Lower lobe of right lung (tissue), 2 donors: ENCODE measurements at regions of chr4 and their contacts with region 1.

Region 1: DNA sequence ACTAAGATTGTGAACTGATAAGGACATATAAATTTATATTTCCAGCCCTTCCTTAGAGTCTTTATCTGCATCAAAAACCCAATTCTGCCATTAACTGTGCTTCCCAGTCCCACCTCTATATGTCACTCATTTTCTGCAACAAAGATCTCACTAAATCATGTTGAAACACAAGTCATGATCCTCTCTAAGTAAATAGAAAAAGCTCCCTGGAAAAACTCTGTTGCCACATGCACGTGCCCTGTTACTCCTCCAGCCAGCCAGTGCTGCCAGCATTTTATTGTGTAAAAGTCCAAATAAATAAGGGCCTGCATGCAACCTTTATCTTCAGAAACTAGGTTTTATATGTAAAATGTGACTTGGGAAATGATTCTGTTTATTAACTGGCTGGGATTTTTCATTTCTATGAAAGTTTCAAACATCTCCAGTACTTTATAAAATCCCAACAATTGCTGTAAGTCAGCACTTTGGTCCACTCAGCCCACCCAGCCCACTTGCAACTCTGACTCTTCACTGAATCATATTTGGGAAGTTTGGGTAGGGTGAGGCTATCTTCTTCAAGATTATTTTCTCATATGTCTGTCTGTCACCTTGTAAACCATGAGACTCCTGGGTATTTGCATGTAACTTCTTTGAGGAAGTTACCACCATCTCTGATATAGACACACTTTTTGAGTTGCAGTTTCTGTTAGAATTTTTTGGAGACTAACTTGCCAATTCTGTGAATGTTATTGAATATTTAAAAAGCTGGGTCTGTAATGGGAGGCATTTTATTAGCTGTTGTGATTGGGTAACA is 40.0 kb upstream of the SMARCA5 start:
- DNase-seq: no peak
- ATAC-seq: no peak
- H3K4me3 ChIP-seq: no peak overlapping the region
- H3K27ac ChIP-seq: no peak overlapping the region
- H3K4me1 ChIP-seq: no peaks in the 10 kb centered on the region
- H3K27me3 ChIP-seq: no peaks in the 10 kb centered on the region
- CTCF ChIP-seq: no peak

Region 2: DNA sequence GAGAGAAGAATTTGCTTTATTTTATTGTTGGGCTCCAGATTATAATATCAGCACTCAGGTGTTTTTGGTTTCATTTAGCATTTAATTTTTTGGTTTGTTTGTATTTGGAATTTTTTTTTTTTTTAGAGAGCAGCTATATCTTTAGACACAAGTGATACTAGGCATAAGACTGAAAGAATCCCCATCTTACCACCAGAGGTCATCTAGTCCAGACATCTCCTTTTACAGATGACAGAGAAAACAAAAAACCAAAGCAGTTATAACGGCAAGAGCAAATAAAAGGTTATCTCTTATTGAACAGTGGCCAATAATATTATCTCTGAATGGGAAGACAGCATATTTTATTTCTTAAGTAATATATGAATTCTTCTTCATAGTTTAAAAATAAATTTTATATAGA is 266.0 kb before region 1 on chr4:
- intact Hi-C with region 1: loop called (anchors 10 kb)
- DNase-seq: no peak
- ATAC-seq: peak in 1 of 2 donors; percentile 35
- H3K4me3 ChIP-seq: no peak overlapping the region
- H3K27ac ChIP-seq: no peak overlapping the region
- H3K4me1 ChIP-seq: no peaks in the 10 kb centered on the region
- H3K27me3 ChIP-seq: no peaks in the 10 kb centered on the region
- CTCF ChIP-seq: peak; percentile 31

Region 3: GRCh38 chr4:143294310-143294709 is 179.2 kb before region 1 on chr4:
- intact Hi-C with region 1: no loop called
- DNase-seq: peak; percentile 58
- ATAC-seq: peak; percentile 67 to 79
- H3K4me3 ChIP-seq: no peak overlapping the region
- H3K27ac ChIP-seq: no peak overlapping the region
- H3K4me1 ChIP-seq: peaks cover 14% of the 10 kb centered on the region
- H3K27me3 ChIP-seq: no peaks in the 10 kb centered on the region
- CTCF ChIP-seq: no peak

Region 4: GRCh38 chr4:143502231-143502630 is 28.7 kb after region 1 on chr4:
- intact Hi-C with region 1: no loop called
- DNase-seq: no peak
- ATAC-seq: no peak
- H3K4me3 ChIP-seq: no peak overlapping the region
- H3K27ac ChIP-seq: no peak overlapping the region
- H3K4me1 ChIP-seq: no peaks in the 10 kb centered on the region
- H3K27me3 ChIP-seq: no peaks in the 10 kb centered on the region
- CTCF ChIP-seq: no peak

Region 5: DNA sequence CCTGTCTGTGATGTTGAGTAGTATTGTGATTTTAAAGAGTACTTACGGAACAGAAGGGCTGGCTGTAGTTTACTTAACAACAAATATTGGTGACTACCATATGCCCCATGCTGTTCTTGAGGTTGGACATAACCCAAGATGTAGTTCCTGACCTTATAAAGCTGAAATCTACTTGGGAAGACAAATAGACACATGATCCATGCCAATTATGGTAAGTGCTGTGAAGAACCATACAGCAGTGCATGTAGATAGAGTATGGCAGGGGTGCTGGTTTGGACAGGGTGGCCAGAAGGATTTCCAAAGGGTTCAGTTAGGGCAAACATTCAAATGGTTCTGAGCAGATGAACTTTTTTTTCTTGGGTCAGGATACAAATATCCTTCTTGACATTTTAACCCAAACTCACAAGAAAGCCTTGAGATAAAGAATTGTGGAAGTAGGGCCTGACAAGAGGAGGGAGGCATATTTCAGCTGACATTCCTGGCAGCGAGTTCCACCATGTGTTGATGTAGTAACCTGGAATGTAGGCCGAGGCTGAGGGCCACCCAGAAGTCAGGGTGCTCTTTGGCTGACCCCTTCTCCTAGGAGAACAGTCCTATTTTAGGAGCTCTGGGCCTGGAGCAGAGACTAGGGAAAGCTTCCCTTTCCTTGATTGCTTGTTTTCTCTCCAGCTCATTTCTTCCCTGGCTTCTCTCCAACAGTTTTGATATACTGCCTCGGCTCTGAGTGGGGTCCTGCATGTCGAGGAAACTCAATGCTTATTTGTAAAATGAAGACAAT is 152.8 kb after region 1 on chr4:
- intact Hi-C with region 1: no loop called
- DNase-seq: peak; percentile 52
- ATAC-seq: peak; percentile 71 to 90
- H3K4me3 ChIP-seq: no peak overlapping the region
- H3K27ac ChIP-seq: no peak overlapping the region
- H3K4me1 ChIP-seq: no peaks in the 10 kb centered on the region
- H3K27me3 ChIP-seq: no peaks in the 10 kb centered on the region
- CTCF ChIP-seq: no peak